ENCODE measurements at regions of chr5 and their contacts with region 1.

Region 1: GRCh38 chr5:80308526-80308925 is 11.3 kb upstream of the SPZ1 start:
- DNase-seq: no peak
- H3K27ac ChIP-seq: no peak overlapping the region
- CTCF ChIP-seq: no peak

Region 2: GRCh38 chr5:80083101-80083890 is 225.2 kb before region 1 on chr5:
- CTCF ChIA-PET with region 1: interaction called, 137 read pairs
- POLR2A ChIA-PET with region 1: no interaction called
- DNase-seq: peak; percentile 87
- H3K27ac ChIP-seq: peak overlapping the region; percentile 35; the same call in 1 of the 2 replicates
- CTCF ChIP-seq: peak; percentile 63

Region 3: GRCh38 chr5:80093796-80094195 is 214.7 kb before region 1 on chr5:
- CTCF ChIA-PET with region 1: interaction called, 137 read pairs
- POLR2A ChIA-PET with region 1: interaction called, 3 read pairs
- DNase-seq: no peak
- H3K27ac ChIP-seq: no peak overlapping the region
- CTCF ChIP-seq: no peak

Region 4: DNA sequence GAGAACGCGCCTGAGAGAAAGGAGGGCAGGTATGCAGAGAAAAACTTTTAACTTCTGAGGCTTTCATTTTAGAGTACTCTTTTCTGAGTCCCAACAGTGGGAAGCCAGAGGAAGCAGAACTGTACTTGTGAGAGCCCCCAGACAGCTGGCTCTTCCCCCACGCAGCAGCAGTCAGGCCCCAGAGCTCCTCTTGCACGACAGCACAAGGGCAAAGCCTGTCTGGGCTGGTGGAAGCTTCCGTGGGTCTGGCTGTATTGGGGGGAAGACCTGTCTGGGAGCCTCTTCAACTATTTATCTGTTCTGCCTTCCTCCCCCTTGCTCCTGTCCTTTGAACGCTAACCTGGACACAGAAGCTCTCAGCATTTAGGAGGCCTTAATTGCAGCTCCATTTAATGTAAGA is 205.2 kb before region 1 on chr5:
- CTCF ChIA-PET with region 1: interaction called, 19 read pairs
- POLR2A ChIA-PET with region 1: no interaction called
- DNase-seq: no peak
- H3K27ac ChIP-seq: no peak overlapping the region
- CTCF ChIP-seq: no peak

Region 5: GRCh38 chr5:80326468-80326867 is 17.9 kb after region 1 on chr5:
- CTCF ChIA-PET with region 1: no interaction called
- POLR2A ChIA-PET with region 1: no interaction called
- DNase-seq: no peak
- H3K27ac ChIP-seq: no peak overlapping the region
- CTCF ChIP-seq: no peak